Prostate gland (tissue), 2 donors: ENCODE measurements at regions of chr2 and their contacts with region 1.

Region 1: DNA sequence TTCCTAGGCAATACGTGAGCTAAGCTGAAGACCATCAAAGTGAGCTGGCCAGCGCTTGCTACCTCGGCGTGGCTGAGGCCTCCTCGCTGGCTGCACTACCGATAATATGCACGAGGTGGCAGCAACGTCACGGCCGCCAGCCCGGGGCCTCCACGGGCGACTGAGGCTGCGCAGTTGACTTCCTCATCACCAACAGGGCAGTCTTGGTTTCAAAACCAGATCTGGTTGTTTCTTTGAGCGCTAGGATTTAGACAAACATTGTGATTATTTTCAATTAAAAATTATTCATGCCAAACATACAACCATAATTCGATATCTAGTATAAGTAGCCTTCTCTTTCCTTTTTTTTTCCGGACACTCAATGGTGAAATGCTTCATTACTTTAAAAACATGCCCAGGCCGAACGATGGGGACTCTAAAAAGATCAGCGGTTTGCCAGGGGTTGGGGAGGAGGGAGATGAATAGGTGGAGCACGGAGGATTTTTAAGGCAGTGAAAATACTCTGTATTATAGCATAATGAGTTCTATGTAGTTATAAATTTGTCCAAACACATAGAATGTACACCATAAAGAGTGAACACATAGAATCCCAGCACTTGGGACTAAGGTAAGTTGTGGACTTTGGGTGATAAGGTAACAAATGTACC is 52.0 kb downstream of the CYBRD1 start:
- DNase-seq: peak; percentile 57
- H3K4me3 ChIP-seq: no peak overlapping the region
- H3K27ac ChIP-seq: no peak overlapping the region
- H3K4me1 ChIP-seq: no peaks in the 10 kb centered on the region
- H3K27me3 ChIP-seq: no peaks in the 10 kb centered on the region
- CTCF ChIP-seq: peak; percentile 81 to 95 (median 90)
- POLR2A ChIP-seq: no peak

Region 2: DNA sequence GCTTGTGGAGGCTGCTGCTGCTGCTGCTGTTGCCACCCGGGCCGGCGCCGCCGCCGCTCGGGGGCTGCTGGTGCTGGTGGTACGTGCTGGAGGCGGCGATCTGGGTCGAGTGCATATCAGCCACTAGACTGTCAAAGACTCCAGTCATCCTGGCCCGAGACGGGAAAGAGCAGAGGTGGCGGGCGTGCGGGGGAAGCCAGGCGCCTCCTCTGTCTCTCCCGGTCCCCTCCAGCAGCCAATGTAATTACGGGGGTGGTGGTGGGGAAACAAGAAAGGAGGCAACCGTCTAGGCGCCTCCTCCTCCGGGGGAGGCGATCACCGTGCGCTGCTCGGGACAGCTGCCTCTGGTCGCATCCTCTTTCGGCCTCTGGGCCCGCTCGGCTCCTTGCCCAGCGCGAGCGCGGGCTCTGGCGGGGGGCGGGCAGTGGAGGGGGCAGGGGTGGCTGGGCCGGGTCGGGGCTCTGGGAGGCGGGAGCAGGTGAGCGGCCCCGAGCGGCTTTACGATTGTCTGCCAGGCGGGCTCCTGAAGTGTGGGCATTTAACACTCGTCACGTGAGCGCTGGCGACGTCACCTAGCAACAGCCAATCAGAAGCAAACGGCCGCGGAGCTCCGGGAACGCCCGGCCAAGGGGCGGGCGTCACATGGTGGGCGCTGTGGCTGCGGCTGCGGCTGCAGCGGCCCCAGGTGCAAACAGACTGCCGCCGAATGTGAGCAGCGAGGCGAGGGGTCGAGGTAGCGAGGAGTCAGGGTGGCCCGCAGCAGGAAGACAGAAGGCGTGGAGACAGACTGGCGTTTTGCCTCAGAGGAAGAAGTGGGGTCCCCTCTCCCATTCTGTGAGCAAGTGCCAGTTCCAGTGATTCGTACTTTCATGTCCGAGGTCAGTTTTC is 528.4 kb after region 1 on chr2 and contains the start of gene DLX2:
- intact Hi-C with region 1: loop called (anchors 10 kb)
- DNase-seq: peak; percentile 63
- H3K4me3 ChIP-seq: peak within 1 kb of the TSS; percentile 18 to 37
- H3K27ac ChIP-seq: no peak within 1 kb of the TSS
- H3K4me1 ChIP-seq: peaks cover 7% of the 10 kb centered on the region
- H3K27me3 ChIP-seq: peaks cover 59% of the 10 kb centered on the region
- CTCF ChIP-seq: no peak
- POLR2A ChIP-seq: no peak
- total RNA-seq, gene DLX2: 0.45 TPM in 1 of 2 donors, not detected in the other

Region 3: DNA sequence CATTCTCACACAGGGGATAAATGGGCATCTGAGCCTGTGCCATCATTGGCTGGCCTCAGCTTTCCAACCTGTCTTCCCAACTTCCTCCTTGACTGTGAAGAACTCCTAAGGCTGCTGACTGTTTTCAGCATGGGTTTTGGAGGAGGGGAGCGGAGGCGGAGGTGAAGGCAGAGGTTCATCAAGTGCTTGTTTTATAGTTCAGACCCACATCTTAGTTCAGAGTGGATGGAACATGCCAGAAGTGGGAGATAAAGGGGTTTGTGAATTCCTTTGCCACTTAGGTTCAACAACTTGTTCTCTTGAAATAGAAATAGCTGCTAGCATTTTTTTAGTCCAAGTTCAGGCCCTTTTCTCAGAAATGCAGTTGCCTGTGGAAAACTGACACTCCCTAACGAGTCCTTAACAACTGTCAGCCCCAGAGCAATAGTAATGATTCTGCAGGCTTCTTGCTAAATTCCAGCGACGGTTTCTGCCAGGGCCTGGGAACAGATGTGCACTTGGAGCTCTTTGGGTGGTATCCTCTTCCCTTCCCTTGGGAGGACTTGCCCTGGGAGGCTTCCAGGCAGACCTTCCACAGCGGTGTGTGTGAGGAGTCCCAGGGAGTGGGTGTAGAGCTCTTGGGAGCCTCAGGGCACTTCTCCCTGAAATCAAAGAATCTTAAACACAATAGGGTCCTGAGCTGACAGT is 823.0 kb after region 1 on chr2:
- intact Hi-C with region 1: no loop called
- DNase-seq: no peak
- H3K4me3 ChIP-seq: no peak overlapping the region
- H3K27ac ChIP-seq: no peak overlapping the region
- H3K4me1 ChIP-seq: no peaks in the 10 kb centered on the region
- H3K27me3 ChIP-seq: no peaks in the 10 kb centered on the region
- CTCF ChIP-seq: no peak
- POLR2A ChIP-seq: no peak